Ovary (tissue), 10 donors: ENCODE measurements at regions of chr3 and their contacts with region 1.

Region 1: DNA sequence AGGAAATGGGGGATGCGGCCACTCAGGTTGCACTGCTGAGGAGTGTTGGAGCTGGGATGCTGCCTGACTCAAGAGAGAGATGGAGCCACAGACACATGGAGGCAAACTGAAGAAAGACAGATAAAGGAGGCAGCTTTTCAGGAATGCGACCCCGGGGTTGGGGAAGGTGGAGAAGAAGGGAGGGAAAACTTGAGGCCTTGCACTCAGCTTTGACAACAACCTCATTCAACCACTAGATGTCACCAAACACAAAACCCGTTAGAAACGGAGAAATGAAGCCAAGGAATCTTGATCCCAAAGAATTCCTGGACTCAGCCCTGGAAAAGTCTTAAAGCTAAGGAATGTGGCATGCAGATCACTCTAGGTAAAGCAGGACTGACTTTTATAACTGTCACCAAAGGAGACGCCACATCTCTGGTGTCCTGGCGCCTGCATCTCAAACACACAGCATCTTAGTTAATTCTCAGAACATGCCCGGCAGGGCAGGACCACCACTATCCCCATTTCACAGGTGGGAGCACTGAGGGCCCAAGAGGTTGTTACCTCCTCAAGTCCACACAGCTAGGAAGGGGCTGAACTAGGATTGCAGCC is 59.6 kb upstream of the LMCD1 start:
- DNase-seq: peak; percentile 21 to 44 (median 37)
- H3K4me3 ChIP-seq: no peak overlapping the region
- H3K27ac ChIP-seq: no peak overlapping the region
- H3K4me1 ChIP-seq: peaks cover 7% of the 10 kb centered on the region
- H3K27me3 ChIP-seq: no peaks in the 10 kb centered on the region
- CTCF ChIP-seq: peak; percentile 73 to 76 (median 73)
- EP300 ChIP-seq: no peak
- POLR2A ChIP-seq: no peak

Region 2: GRCh38 chr3:8501371-8502131 is 59.5 kb after region 1 on chr3 and contains the start of gene LMCD1:
- intact Hi-C with region 1: loop called in 2 of 4 experiments (anchors 10 kb)
- DNase-seq: peak; percentile 94 to 97 (median 95)
- H3K4me3 ChIP-seq: peak within 1 kb of the TSS; percentile 50
- H3K27ac ChIP-seq: peak within 1 kb of the TSS; percentile 34 to 88
- H3K4me1 ChIP-seq: peaks cover 18% of the 10 kb centered on the region
- H3K27me3 ChIP-seq: no peaks in the 10 kb centered on the region
- CTCF ChIP-seq: peak; percentile 22 to 38 (median 22)
- EP300 ChIP-seq: peak; percentile 19
- POLR2A ChIP-seq: peak; percentile 65
- total RNA-seq, gene LMCD1: 42.1 to 146 (median 124) TPM

Region 3: DNA sequence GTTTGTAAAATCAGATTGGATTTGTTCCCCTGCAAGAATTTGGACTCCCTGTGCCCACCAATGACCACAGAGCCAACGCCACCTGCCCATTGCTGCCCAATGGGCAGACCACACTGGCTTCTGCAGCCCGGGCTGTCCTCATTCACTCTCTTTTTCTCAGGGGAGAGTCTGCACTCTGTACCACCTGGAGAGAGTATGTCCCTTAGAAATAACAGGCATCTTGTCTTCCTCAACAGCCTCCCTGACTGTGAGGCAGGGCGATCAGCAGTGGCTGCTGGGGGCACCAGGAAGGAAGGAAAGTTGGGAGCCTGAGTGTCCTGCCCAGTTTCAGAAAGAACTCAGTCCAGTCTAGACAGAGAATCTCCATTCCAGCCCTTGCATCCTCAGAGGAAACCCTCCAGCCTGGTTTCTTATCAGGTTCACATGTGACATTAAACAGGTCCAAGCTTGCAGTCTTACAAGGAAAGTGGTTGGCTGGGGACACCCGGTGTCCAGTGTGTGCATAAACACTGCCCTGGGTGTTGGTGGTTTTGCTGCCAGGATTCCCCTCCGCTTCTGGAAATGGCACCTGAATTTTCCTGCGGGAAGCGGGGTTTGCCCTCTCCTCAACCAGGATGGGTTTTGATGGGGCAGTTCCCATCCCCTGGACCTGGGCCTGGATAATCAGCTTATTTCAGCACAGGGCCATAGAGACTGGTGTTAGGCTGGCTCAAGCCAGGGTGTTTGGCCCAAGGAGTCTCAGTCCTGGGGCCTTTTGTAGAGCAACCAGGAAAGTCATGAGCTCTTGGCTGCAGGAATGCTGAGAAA is 165.4 kb after region 1 on chr3:
- intact Hi-C with region 1: loop called in 2 of 4 experiments (anchors 2 to 5 kb)
- DNase-seq: peak; percentile 59 to 76 (median 71)
- H3K4me3 ChIP-seq: no peak overlapping the region
- H3K27ac ChIP-seq: no peak overlapping the region
- H3K4me1 ChIP-seq: peaks cover 8% of the 10 kb centered on the region
- H3K27me3 ChIP-seq: no peaks in the 10 kb centered on the region
- CTCF ChIP-seq: peak; percentile 24 to 87 (median 85)
- EP300 ChIP-seq: no peak
- POLR2A ChIP-seq: no peak

Region 4: GRCh38 chr3:8622873-8623691 is 181.0 kb after region 1 on chr3:
- intact Hi-C with region 1: loop called (anchors 5 kb)
- DNase-seq: peak; percentile 69 to 84 (median 79)
- H3K4me3 ChIP-seq: no peak overlapping the region
- H3K27ac ChIP-seq: no peak overlapping the region
- H3K4me1 ChIP-seq: peaks cover 5% of the 10 kb centered on the region
- H3K27me3 ChIP-seq: no peaks in the 10 kb centered on the region
- CTCF ChIP-seq: peak; percentile 83 to 92 (median 91)
- EP300 ChIP-seq: no peak
- POLR2A ChIP-seq: no peak